Sciatic nerve (tissue), 2 donors: ENCODE measurements at regions of chr2 and their contacts with region 1.

Region 1: GRCh38 chr2:154381931-154382794 is 316.3 kb upstream of the KCNJ3 start:
- DNase-seq: no peak
- ATAC-seq: no peak

Region 2: GRCh38 chr2:153953761-153954160 is 428.4 kb before region 1 on chr2:
- intact Hi-C with region 1: loop called (anchors 5 kb)
- DNase-seq: no peak
- ATAC-seq: no peak